PC-9 (cell line): ENCODE measurements at regions of chr5 and their contacts with region 1.

Region 1: GRCh38 chr5:96934708-96935558 is 947 bp upstream of the LNPEP start:
- DNase-seq: peak; percentile 87 to 97
- H3K4me3 ChIP-seq: peak overlapping the region; percentile 94
- H3K27ac ChIP-seq: peak overlapping the region; percentile 80
- H3K4me1 ChIP-seq: peaks cover 31% of the 10 kb centered on the region
- H3K27me3 ChIP-seq: no peaks in the 10 kb centered on the region
- CTCF ChIP-seq: no peak; the same call in 1 of the 2 replicates

Region 2: DNA sequence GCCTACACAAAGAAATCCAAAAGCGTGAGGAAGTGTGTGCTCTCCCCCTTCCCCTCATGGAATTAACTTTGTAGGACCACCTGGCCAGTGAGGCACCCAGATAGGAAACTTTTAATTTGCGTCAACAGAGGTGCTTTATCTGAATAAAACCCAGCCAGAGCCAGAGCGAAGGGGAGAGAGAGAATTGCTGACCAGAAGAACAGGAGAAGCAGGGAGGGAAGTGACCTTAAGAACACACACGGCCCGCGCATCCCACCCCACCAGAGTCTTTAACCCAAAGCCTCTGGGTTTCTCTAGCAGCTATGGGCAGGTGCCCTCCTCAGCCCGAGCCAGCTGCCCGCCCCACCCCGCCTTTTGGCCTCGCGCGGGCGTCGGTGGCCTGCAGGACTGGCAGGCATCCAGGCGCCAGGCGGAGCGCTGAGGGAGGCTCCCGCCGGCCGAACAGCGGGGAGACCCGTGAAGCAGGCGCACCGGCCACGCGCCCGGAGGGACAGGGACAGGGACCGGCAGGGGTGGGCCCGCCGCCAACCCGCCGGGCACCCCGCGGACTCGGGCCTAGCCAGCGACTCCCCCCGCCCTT is 127.8 kb before region 1 on chr5:
- CTCF ChIA-PET with region 1: no interaction called
- POLR2A ChIA-PET with region 1: no interaction called
- intact Hi-C with region 1: loop called (anchors 2 kb)
- DNase-seq: peak; percentile 51 to 82
- H3K4me3 ChIP-seq: peak overlapping the region; percentile 89
- H3K27ac ChIP-seq: peak overlapping the region; percentile 96
- H3K4me1 ChIP-seq: peaks cover 9% of the 10 kb centered on the region; the same call in 1 of the 2 replicates
- H3K27me3 ChIP-seq: no peaks in the 10 kb centered on the region
- CTCF ChIP-seq: no peak

Region 3: DNA sequence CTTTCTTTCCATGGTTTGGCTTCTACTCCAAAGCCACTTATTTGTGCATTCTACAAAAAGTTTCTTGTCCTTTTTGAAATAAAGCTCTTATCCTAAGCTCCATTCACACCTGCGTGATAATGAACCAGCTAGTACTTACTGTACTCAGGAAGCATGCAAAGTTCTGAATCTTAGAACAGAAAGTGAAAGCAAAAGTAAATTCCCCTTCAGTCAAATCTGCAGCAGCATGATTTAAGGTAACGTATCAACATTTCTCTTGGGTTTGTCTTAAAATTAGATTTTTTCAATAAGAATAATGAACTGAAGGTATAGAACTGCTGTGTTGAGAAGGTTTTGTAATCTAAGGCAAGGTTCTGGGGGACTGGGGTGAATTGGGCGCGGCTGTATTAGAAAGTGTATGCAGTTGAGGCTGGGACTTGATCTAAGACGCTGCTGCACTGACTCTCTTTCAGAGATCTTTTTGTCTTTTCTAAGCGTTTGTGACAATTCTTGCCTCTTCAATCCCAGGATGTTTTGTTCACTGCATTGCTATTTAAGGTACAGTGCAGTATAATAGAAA is 58.6 kb before region 1 on chr5 and contains the start of gene ERAP2:
- CTCF ChIA-PET with region 1: interaction called, 4 read pairs
- POLR2A ChIA-PET with region 1: no interaction called
- intact Hi-C with region 1: loop called (anchors 1 kb)
- DNase-seq: peak in 1 of 2 experiments; percentile 60
- H3K4me3 ChIP-seq: peak within 1 kb of the TSS; percentile 64
- H3K27ac ChIP-seq: 0 out of 2 replicates have a peak within 1 kb of the TSS, but pooled peaks have one; percentile 1
- H3K4me1 ChIP-seq: peaks cover 29% of the 10 kb centered on the region
- H3K27me3 ChIP-seq: no peaks in the 10 kb centered on the region
- CTCF ChIP-seq: no peak
- total RNA-seq, gene ERAP2: 48.2 and 51.9 TPM in 2 replicates

Region 4: DNA sequence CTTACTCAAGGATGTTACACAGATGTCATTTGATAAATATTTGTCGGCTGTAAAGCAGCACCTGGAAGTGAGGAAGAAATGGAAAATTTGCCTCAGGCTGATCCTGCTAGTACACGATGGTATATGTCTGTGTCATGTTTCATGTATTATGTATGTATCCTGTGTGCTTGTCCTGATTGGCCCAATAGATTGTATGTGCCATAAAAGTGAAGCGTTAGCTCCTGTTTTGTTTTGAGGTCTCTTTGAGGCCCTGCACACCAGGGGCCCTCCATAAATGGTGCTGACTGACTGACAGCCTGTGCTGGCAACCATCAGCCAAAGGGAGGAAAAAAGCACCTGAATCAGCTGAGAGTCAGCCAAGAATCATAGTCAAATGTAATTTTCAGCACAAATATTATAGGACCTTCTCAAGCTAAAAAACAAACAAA is 10.9 kb before region 1 on chr5:
- CTCF ChIA-PET with region 1: no interaction called
- POLR2A ChIA-PET with region 1: interaction called, 15 read pairs
- intact Hi-C with region 1: no loop called
- DNase-seq: no peak
- H3K4me3 ChIP-seq: no peak overlapping the region
- H3K27ac ChIP-seq: no peak overlapping the region
- H3K4me1 ChIP-seq: no peaks in the 10 kb centered on the region
- H3K27me3 ChIP-seq: no peaks in the 10 kb centered on the region
- CTCF ChIP-seq: no peak

Region 5: DNA sequence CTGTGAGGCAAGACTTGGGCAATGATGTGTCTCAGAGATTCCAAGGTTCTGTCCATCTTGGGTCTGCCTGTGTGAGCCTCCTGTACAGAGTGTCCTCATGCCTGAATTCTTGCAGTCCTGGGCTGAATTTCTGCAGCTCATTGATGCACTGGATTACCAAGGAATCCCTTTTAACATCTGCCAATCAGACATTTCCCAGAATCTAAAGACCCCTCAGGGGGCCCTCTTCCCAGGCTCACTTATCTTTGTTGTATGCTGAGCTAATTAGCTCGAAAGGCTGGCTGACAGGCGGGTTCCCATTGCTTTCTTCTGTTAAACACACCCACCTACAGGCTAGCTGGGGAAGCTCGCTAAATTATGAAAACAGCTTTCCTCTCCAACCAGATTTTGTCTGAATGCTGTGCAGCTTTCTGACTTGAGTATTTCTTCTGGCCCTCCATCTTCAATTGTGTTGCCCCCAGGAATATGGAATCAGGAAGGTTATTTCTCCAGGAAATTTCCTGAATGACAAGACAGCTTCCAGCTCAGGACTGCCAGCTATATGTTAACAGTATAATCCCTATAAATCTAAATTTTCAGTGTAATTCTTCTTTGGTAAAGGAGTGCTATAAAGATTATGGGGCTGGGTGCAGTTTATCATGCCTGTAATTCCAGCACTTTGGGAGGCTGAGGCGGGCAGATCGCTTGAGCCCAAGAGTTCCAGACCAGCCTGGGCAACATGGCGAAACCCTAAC is 207.8 kb after region 1 on chr5 and contains the start of gene LIX1:
- CTCF ChIA-PET with region 1: interaction called, 6 read pairs
- POLR2A ChIA-PET with region 1: no interaction called
- intact Hi-C with region 1: loop called (anchors 10 kb)
- DNase-seq: peak in 1 of 2 experiments; percentile 26
- H3K4me3 ChIP-seq: no peak within 1 kb of the TSS
- H3K27ac ChIP-seq: no peak within 1 kb of the TSS
- H3K4me1 ChIP-seq: no peaks in the 10 kb centered on the region
- H3K27me3 ChIP-seq: no peaks in the 10 kb centered on the region
- CTCF ChIP-seq: peak; percentile 73
- total RNA-seq, gene LIX1: not detected in 2 replicates